ENCODE measurements at regions of chr11 and their contacts with region 1.

Region 1: GRCh38 chr11:25483915-25484635 is 847.9 kb upstream of the ANO3 start:
- DNase-seq: no peak
- ATAC-seq: no peak
- H3K4me3 ChIP-seq: no peak overlapping the region
- H3K4me3 Mint-ChIP-seq: no peak overlapping the region
- H3K27ac ChIP-seq: no peak overlapping the region
- H3K27ac Mint-ChIP-seq: no peak overlapping the region
- H3K4me1 ChIP-seq: no peaks in the 10 kb centered on the region
- H3K4me1 Mint-ChIP-seq: no peaks in the 10 kb centered on the region
- H3K27me3 ChIP-seq: no peaks in the 10 kb centered on the region
- H3K27me3 Mint-ChIP-seq: no peaks in the 10 kb centered on the region

Region 2: DNA sequence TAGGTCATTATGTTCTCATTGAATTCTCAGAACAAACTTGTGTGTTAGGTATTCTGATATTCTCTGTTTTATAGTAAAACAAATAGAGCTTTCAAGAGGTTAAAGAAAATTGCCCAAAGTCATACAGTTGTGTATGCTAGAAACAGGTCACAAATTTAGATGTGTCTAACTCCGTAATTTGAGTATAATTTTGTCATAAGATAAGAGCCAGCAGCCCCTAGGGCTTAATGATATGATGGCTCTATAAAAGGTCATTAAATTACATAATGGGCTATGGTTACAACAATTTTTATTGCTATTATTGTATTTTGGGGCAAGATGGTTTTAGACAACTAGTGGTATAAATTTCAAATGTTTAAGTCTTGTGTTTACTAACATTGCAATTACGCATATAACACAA is 285.4 kb before region 1 on chr11:
- CTCF ChIA-PET with region 1: no interaction called
- POLR2A ChIA-PET with region 1: no interaction called
- intact Hi-C with region 1: no loop called
- DNase-seq: no peak
- ATAC-seq: no peak
- H3K4me3 ChIP-seq: no peak overlapping the region
- H3K4me3 Mint-ChIP-seq: no peak overlapping the region
- H3K27ac ChIP-seq: no peak overlapping the region
- H3K27ac Mint-ChIP-seq: no peak overlapping the region
- H3K4me1 ChIP-seq: no peaks in the 10 kb centered on the region
- H3K4me1 Mint-ChIP-seq: no peaks in the 10 kb centered on the region
- H3K27me3 ChIP-seq: no peaks in the 10 kb centered on the region
- H3K27me3 Mint-ChIP-seq: no peaks in the 10 kb centered on the region

Region 3: DNA sequence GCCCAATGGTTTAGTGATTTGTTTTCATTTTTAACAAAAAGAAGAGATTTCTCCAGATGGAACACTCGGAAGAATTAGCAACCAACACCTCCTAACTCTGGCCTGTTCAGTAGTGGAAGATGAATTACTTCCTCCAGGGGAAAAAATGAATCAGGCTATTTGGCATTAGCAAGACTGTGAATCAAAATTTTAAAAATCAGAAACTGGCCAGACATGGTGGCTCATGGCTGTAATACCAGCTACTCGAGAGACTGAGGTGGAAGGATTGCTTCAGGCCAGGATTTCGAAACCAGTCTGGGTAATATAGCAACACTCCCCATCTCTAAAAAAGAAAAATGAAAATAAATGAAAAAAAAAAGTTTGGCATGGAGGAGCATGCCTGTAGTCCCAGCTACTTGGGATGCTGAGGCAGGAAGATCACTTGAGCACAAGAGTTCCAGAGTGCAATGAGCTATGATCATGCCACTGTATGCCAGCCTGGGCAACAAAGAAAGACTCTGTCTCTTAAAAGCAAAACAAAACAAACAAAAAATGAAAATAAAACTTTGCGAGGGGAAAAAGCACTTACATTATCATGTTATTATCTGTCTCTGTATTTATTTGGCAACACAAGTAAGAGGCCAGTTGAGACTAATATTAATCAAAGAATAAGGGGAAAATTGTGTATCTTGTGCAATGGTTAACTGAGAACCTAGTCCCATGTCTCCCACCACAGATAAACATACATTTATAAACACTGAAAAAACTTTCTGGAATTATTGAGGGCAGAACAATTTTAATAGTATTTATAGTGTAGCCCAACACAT is 51.6 kb after region 1 on chr11:
- CTCF ChIA-PET with region 1: no interaction called
- POLR2A ChIA-PET with region 1: no interaction called
- intact Hi-C with region 1: loop called in 1 of 2 experiments (anchors 10 kb)
- DNase-seq: no peak
- ATAC-seq: no peak
- H3K4me3 ChIP-seq: no peak overlapping the region
- H3K4me3 Mint-ChIP-seq: no peak overlapping the region
- H3K27ac ChIP-seq: no peak overlapping the region
- H3K27ac Mint-ChIP-seq: no peak overlapping the region
- H3K4me1 ChIP-seq: no peaks in the 10 kb centered on the region
- H3K4me1 Mint-ChIP-seq: no peaks in the 10 kb centered on the region
- H3K27me3 ChIP-seq: no peaks in the 10 kb centered on the region
- H3K27me3 Mint-ChIP-seq: no peaks in the 10 kb centered on the region

Region 4: GRCh38 chr11:25667871-25668270 is 183.8 kb after region 1 on chr11:
- CTCF ChIA-PET with region 1: no interaction called
- POLR2A ChIA-PET with region 1: no interaction called
- intact Hi-C with region 1: loop called in 1 of 2 experiments (anchors 10 kb)
- DNase-seq: no peak
- ATAC-seq: no peak
- H3K4me3 ChIP-seq: no peak overlapping the region
- H3K4me3 Mint-ChIP-seq: no peak overlapping the region
- H3K27ac ChIP-seq: no peak overlapping the region
- H3K27ac Mint-ChIP-seq: no peak overlapping the region
- H3K4me1 ChIP-seq: no peaks in the 10 kb centered on the region
- H3K4me1 Mint-ChIP-seq: peaks cover 0 to 1% (median 0%) of the 10 kb centered on the region in 7 donors
- H3K27me3 ChIP-seq: no peaks in the 10 kb centered on the region
- H3K27me3 Mint-ChIP-seq: no peaks in the 10 kb centered on the region